ENCODE measurements at regions of chr14 and their contacts with region 1.

Region 1: DNA sequence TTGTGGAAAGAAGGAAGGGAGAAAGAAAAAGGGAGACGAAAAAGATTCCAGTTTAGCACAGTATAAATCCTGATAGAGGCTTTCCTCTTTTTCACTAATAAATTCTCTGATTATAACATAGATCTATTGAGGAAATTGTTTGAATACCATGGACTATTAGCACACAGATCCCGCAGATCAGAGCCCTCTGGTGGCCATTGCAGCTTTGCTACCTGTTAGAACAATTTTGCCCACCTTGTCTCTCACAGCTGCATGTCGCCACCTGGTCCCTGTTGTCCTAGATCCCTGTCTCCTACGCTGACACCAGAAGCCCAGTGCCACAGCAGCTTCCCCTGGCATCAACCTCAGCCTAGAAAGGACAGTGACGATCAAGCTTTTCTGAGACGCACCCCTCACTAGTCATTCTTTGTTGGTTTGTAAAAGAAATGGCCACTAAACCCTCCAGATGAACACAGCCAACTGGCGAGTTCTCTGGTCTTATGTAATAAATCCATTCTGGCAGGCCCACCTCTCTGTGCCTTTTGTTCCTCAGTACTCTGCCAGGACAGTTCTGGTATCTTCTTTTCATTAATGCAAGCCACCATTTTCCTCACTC is 9.9 kb downstream of the GPHB5 start:
- DNase-seq: peak; percentile 23 to 64
- H3K4me3 ChIP-seq: no peak overlapping the region
- H3K27ac ChIP-seq: no peak overlapping the region
- H3K4me1 ChIP-seq: no peaks in the 10 kb centered on the region
- H3K27me3 ChIP-seq: no peaks in the 10 kb centered on the region
- CTCF ChIP-seq: peak; percentile 62 to 80 (median 71)
- EP300 ChIP-seq: no peak
- POLR2A ChIP-seq: no peak
- RAD21 ChIP-seq: peak; percentile 58 to 64

Region 2: GRCh38 chr14:62162998-62163589 is 1145.7 kb before region 1 on chr14:
- CTCF ChIA-PET with region 1: interaction called, 13 read pairs
- POLR2A ChIA-PET with region 1: no interaction called
- DNase-seq: peak in 1 of 2 experiments; percentile 19
- H3K4me3 ChIP-seq: no peak overlapping the region
- H3K27ac ChIP-seq: no peak overlapping the region
- H3K4me1 ChIP-seq: no peaks in the 10 kb centered on the region; a peak in 1 of 7 replicates
- H3K27me3 ChIP-seq: no peaks in the 10 kb centered on the region
- CTCF ChIP-seq: peak in 2 of 3 experiments; percentile 74 to 92; a peak in 3 of 4 replicates
- EP300 ChIP-seq: no peak
- POLR2A ChIP-seq: no peak
- RAD21 ChIP-seq: peak; percentile 94 to 96

Region 3: GRCh38 chr14:63296060-63296563 is 12.7 kb before region 1 on chr14:
- CTCF ChIA-PET with region 1: interaction called, 28 read pairs
- POLR2A ChIA-PET with region 1: interaction called, 3 read pairs
- DNase-seq: no peak
- H3K4me3 ChIP-seq: no peak overlapping the region
- H3K27ac ChIP-seq: no peak overlapping the region
- H3K4me1 ChIP-seq: peaks cover 0 to 5% (median 2%) of the 10 kb centered on the region in 4 experiments; a peak in 3 of 7 replicates
- H3K27me3 ChIP-seq: no peaks in the 10 kb centered on the region
- CTCF ChIP-seq: no peak
- EP300 ChIP-seq: no peak
- POLR2A ChIP-seq: no peak
- RAD21 ChIP-seq: no peak

Region 4: GRCh38 chr14:63322897-63323573 is 14.2 kb after region 1 on chr14:
- CTCF ChIA-PET with region 1: interaction called, 20 read pairs
- POLR2A ChIA-PET with region 1: no interaction called
- DNase-seq: no peak
- H3K4me3 ChIP-seq: no peak overlapping the region
- H3K27ac ChIP-seq: no peak overlapping the region
- H3K4me1 ChIP-seq: no peaks in the 10 kb centered on the region
- H3K27me3 ChIP-seq: no peaks in the 10 kb centered on the region; a peak in 1 of 7 replicates
- CTCF ChIP-seq: no peak
- EP300 ChIP-seq: no peak
- POLR2A ChIP-seq: no peak
- RAD21 ChIP-seq: no peak

Measured in H1 (cell line).